ENCODE measurements at regions of chr22 and their contacts with region 1.

Region 1: GRCh38 chr22:41091132-41092022 is 1.0 kb upstream of the EP300 start:
- DNase-seq: peak; percentile 97 to 100 (median 99)
- H3K4me3 ChIP-seq: peak overlapping the region; percentile 63 to 99 (median 93)
- H3K27ac ChIP-seq: peak overlapping the region; percentile 93 to 100 (median 100)
- H3K27me3 ChIP-seq: no peaks in the 10 kb centered on the region
- CTCF ChIP-seq: peak in 18 of 56 donors; percentile 4 to 42 (median 22)

Region 2: GRCh38 chr22:40950962-40951794 is 140.2 kb before region 1 on chr22 and contains the start of gene RBX1:
- intact Hi-C with region 1: loop called (anchors 1 kb)
- DNase-seq: peak; percentile 96 to 100 (median 98)
- H3K4me3 ChIP-seq: peak within 1 kb of the TSS; percentile 66 to 97 (median 89)
- H3K27ac ChIP-seq: peak within 1 kb of the TSS; percentile 92 to 100 (median 99)
- H3K27me3 ChIP-seq: no peaks in the 10 kb centered on the region
- CTCF ChIP-seq: peak in 10 of 56 donors; percentile 3 to 23 (median 10)
- total RNA-seq, gene RBX1: 33.0 to 73.0 (median 57.3) TPM

Region 3: GRCh38 chr22:41181349-41182241 is 90.2 kb after region 1 on chr22:
- intact Hi-C with region 1: no loop called
- DNase-seq: peak in 1 of 10 donors; percentile 51
- H3K4me3 ChIP-seq: no peak overlapping the region
- H3K27ac ChIP-seq: peak overlapping the region in 23 of 59 donors; percentile 2 to 63 (median 26)
- H3K27me3 ChIP-seq: no peaks in the 10 kb centered on the region
- CTCF ChIP-seq: no peak

Region 4: GRCh38 chr22:41204992-41205900 is 113.9 kb after region 1 on chr22 and contains the start of gene L3MBTL2:
- intact Hi-C with region 1: loop called in 1 of 2 experiments (anchors 10 kb)
- DNase-seq: peak; percentile 99
- H3K4me3 ChIP-seq: peak within 1 kb of the TSS; percentile 44 to 99 (median 85)
- H3K27ac ChIP-seq: peak within 1 kb of the TSS in 55 of 59 donors; percentile 11 to 92 (median 80)
- H3K27me3 ChIP-seq: no peaks in the 10 kb centered on the region
- CTCF ChIP-seq: peak in 28 of 56 donors; percentile 7 to 46 (median 26)
- total RNA-seq, gene L3MBTL2: 24.3 to 54.4 (median 39.0) TPM

Region 5: GRCh38 chr22:41285820-41286638 is 194.7 kb after region 1 on chr22 and contains the start of gene RANGAP1:
- intact Hi-C with region 1: loop called in 1 of 2 experiments (anchors 10 kb)
- DNase-seq: peak; percentile 96 to 100 (median 99)
- H3K4me3 ChIP-seq: peak within 1 kb of the TSS; percentile 68 to 99 (median 94)
- H3K27ac ChIP-seq: peak within 1 kb of the TSS; percentile 75 to 99 (median 97)
- H3K27me3 ChIP-seq: no peaks in the 10 kb centered on the region
- CTCF ChIP-seq: peak in 32 of 56 donors; percentile 2 to 66 (median 34)
- total RNA-seq, gene RANGAP1: 115 to 243 (median 177) TPM

Region 6: DNA sequence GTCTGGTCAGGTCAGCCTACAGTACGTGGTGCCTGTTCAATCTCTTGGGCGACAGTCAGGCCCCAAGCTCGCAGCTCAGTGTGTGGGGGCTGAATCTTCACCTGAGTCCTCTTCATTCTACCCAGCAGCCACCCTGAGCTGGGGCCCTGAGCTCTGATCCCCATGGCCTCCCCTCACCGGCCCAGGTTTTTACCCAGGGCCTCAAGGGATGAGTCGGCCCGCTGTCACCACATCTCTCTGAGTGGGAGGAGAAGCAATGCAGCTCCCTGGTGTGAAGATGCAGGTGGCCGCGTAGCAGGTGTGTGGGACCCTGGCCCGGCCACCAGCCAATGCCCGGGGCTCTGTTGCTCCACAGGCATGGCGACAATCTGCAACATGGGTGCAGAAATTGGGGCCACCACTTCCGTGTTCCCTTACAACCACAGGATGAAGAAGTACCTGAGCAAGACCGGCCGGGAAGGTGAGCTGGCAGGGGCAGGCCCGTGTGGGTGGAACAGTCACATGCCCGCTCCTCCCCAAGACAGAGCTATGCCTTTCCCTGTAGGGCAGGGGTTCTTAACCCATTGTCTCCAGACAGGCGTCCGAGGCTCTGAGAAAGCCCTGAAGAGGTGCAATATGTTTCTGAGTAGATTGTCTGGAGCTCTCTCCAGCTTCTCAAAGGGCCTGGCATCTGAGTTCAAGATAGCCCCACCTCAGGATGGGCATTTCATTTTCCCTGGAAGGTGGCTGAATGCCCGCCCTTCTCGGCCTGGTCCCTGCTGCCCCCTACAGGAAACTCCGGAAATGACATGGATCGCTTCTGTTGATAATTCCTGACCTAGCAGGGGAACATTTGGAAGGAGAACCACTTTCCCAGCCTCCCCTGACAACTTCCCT is 426.0 kb after region 1 on chr22:
- intact Hi-C with region 1: loop called in 1 of 2 experiments (anchors 10 kb)
- DNase-seq: peak in 9 of 10 donors; percentile 74 to 90 (median 86)
- H3K4me3 ChIP-seq: peak overlapping the region in 8 of 59 donors; percentile 12 to 33 (median 23)
- H3K27ac ChIP-seq: peak overlapping the region; percentile 22 to 100 (median 97)
- H3K27me3 ChIP-seq: no peaks in the 10 kb centered on the region
- CTCF ChIP-seq: peak; percentile 82 to 97 (median 92)